IMR-90 (cell line): ENCODE measurements at regions of chr5 and their contacts with region 1.

Region 1: GRCh38 chr5:42908509-42909488 is 97.1 kb upstream of the SELENOP start:
- DNase-seq: peak; percentile 85
- ATAC-seq: peak; percentile 96
- H3K4me3 ChIP-seq: peak overlapping the region; percentile 50
- H3K27ac ChIP-seq: no peak overlapping the region
- H3K4me1 ChIP-seq: no peaks in the 10 kb centered on the region
- H3K27me3 ChIP-seq: peaks cover 13% of the 10 kb centered on the region
- CTCF ChIP-seq: peak; percentile 83
- POLR2A ChIP-seq: no peak
- RAD21 ChIP-seq: peak; percentile 78

Region 2: DNA sequence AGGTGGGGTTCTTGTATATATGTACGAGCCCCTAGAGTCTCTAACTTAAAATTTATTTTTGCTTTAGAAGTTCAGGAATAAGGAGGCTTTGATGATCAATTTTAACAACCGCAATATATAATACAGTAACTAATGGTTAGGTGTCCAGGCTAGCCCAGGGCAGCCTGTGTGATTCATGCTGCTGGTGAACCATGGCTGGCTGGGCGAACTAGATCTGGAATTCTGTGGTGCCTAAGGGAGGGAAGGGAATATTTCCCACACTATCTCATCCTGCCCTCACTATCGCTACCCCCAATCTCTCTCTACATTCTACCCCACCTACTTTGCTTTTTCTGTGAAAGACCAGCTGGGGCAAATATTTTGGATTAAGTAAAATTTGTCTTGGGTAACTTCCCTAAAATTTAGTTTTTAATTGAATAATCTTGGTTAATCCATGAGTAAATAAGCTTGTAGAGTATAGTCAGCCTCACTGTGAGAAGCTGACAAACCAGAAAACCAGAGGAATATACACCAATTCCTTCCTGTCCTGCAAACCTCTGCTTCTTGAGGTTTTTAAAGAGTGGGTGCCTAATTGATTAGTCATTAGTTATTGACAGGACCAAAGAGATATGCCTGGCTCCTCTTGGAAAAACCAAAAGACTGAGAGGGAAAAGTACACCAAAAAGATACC is 267.3 kb before region 1 on chr5:
- CTCF ChIA-PET with region 1: no interaction called
- POLR2A ChIA-PET with region 1: no interaction called
- dilution Hi-C with region 1: no loop called
- in situ Hi-C with region 1: no loop called
- intact Hi-C with region 1: no loop called
- DNase-seq: no peak
- ATAC-seq: no peak
- H3K4me3 ChIP-seq: no peak overlapping the region
- H3K27ac ChIP-seq: no peak overlapping the region
- H3K4me1 ChIP-seq: no peaks in the 10 kb centered on the region
- H3K27me3 ChIP-seq: no peaks in the 10 kb centered on the region
- CTCF ChIP-seq: no peak
- POLR2A ChIP-seq: no peak
- RAD21 ChIP-seq: no peak

Region 3: DNA sequence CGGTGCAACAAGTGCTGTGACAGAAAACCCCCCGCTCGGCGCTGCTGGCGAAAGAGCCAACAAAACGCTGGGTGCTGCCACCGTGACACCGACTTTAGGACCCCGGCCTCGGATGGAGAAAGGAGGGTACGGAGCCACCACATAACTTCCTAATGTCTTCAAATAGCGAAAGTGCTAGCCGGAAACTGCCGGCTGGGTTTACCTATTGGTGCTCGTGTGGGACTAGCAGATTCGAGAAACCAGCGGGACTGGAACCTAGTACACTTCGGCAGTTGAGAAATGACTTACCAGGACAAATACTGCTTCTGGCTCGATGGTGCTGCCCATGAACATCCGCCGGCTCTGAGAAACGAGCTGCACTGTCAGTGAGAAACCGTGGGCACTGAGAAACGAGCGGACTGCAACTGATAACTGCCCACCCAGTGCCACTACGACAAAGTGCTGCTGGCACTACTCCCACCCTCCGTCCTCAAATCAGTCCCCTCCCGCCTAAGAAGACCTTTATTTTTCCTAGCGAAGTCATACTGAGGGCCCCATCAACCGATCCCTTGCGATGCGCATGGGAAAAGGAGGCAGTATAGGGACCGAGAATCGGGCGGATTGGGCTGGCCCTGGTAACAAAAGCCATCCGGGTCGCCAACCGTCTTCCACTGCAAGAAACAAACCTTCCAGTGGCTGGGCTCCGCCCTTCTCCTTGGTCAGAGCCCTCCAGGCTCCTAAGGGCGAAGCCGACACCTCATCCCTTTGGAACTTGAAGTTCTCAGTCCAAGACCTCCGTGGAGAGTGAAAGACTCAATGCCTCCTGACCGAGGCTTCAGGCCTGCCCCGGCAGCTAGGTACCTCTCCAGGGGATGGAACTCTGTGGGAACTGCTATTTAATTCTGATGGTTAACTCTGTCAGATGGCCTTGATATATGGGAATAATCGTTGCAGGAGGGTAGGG is 158.3 kb after region 1 on chr5:
- CTCF ChIA-PET with region 1: interaction called, 3 read pairs
- POLR2A ChIA-PET with region 1: interaction called, 3 read pairs
- dilution Hi-C with region 1: no loop called
- in situ Hi-C with region 1: no loop called
- intact Hi-C with region 1: loop called (anchors 1 kb)
- DNase-seq: peak; percentile 91
- ATAC-seq: peak; percentile 56
- H3K4me3 ChIP-seq: peak overlapping the region; percentile 69
- H3K27ac ChIP-seq: peak overlapping the region; percentile 88
- H3K4me1 ChIP-seq: peaks cover 4% of the 10 kb centered on the region
- H3K27me3 ChIP-seq: no peaks in the 10 kb centered on the region
- CTCF ChIP-seq: no peak
- POLR2A ChIP-seq: peak; percentile 89
- RAD21 ChIP-seq: no peak

Region 4: DNA sequence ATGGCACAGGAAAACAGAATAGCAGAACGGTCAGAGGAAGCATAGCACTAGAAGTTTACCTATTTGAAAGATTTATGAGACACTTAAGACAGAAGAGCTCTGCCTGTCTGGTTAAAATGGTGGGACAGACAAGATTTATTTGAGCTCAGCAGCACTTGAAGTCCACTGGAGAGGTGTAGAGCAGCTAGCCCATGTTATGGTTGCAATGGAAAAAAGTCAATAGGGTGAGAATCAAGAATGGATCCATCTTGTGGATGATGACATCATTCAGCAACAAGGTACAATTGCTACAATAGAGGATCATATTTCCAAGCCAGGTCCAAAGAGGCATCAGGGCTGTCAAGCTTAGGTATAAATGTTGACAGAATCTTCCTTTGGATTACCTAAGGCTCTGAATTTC is 190.8 kb after region 1 on chr5:
- CTCF ChIA-PET with region 1: no interaction called
- POLR2A ChIA-PET with region 1: no interaction called
- dilution Hi-C with region 1: no loop called
- in situ Hi-C with region 1: no loop called
- intact Hi-C with region 1: no loop called
- DNase-seq: no peak
- ATAC-seq: no peak
- H3K4me3 ChIP-seq: no peak overlapping the region
- H3K27ac ChIP-seq: no peak overlapping the region
- H3K4me1 ChIP-seq: peaks cover 1% of the 10 kb centered on the region; the same call in 1 of the 2 replicates
- H3K27me3 ChIP-seq: no peaks in the 10 kb centered on the region
- CTCF ChIP-seq: no peak
- POLR2A ChIP-seq: no peak
- RAD21 ChIP-seq: no peak

Region 5: DNA sequence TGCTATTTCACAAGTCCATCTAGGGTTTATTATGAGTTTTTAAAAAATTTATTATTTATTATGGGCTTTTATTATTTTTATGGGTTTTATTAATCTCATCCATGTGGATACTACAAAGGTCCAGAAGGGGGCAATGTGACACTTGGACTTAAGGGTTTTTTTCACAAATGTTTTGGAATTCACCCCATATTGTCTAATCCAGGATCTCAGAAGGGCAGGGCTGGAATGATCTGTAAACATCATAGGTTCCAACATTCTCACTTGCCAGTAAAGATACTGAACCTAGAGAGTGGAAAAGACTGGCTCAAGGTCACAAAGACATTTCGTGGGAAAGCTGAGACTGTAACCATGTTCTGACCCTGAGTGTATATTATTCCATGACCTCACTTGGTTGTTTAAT is 318.9 kb after region 1 on chr5:
- CTCF ChIA-PET with region 1: no interaction called
- POLR2A ChIA-PET with region 1: no interaction called
- dilution Hi-C with region 1: no loop called
- in situ Hi-C with region 1: no loop called
- intact Hi-C with region 1: no loop called
- DNase-seq: peak; percentile 64
- ATAC-seq: peak; percentile 83
- H3K4me3 ChIP-seq: no peak overlapping the region
- H3K27ac ChIP-seq: no peak overlapping the region
- H3K4me1 ChIP-seq: no peaks in the 10 kb centered on the region
- H3K27me3 ChIP-seq: peaks cover 4% of the 10 kb centered on the region; the same call in 1 of the 2 replicates
- CTCF ChIP-seq: peak; percentile 67
- POLR2A ChIP-seq: no peak
- RAD21 ChIP-seq: peak; percentile 58